Posterior vena cava (tissue), 2 donors: ENCODE measurements at regions of chr3 and their contacts with region 1.

Region 1: DNA sequence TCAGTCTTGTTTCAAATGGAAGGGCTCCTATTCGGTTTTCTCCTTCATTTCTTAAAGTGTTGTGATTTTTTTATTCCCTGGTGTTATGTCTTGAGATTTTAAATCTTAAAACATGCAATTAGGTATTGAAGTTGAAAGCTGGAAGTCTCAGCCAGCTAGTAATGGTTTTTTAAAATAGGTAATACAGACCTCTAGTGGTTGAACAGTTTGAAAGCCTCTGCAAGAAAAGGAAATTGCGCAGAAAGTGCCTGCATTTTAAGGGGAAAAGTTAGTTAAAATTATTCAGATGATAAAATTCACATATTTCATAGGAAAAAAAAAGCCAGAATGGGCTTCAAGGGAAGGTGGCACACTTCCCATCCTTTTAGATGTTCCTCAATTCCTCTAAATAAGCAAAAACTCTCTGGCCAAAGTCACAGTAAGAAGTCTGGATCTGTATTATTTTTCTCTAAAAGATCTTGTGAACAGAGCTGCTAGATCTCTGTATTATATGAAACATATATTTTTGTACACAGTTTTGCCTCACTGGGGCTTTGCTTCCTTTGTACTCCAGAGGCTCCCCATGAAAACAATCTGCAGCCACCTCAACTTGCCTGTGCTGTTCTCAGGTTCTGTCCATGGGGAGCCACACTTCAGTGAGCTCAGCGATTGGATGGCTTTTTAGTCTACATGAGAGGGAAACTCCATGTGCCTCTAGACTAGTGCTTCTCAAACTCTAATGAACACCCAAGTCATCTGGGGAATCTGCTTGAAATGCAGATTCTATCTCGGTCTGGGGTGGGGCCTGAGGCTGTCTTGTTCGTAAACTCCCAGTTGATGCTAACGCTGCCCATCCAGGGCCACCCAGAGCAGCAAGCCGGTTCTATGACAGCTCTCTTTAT is 21.5 kb downstream of the AGTR1 start:
- DNase-seq: no peak

Region 2: DNA sequence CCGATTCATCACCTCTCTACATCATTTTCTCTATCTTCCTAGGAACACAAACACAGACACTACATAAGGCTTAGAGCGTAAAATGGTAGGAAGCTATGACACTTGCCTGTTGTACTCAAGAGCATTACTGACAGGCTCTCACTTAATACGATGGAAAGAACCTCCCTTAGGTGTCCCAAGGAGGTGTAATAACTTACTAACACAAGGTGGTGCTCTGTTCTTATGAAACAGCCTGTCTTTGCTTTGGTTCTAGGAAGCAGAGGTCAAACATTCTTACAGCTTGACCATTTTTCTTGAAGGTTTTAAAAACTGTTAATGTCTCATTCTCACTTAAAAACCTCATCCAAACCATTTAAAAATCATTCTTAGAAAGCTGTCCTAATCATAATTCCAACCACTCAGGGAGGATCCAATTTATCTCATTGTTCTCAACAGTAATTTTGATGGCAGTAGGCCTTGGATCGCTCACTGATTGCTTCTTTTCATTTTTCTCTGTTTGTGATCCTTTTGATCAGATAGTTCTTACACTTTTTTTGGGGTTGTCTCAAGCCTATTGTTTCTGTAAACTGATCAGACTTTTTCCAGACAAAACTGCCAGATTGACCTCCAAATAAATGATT is 339.3 kb before region 1 on chr3:
- intact Hi-C with region 1: loop called in 1 of 2 experiments (anchors 10 kb)
- DNase-seq: no peak

Region 3: GRCh38 chr3:148631124-148631903 is 87.9 kb before region 1 on chr3:
- intact Hi-C with region 1: no loop called
- DNase-seq: no peak